PC-3 (cell line): ENCODE measurements at regions of chr15 and their contacts with region 1.

Region 1: GRCh38 chr15:44215594-44215993 is 20.5 kb upstream of the FRMD5 start:
- DNase-seq: peak; percentile 97
- ATAC-seq: peak; percentile 97
- H3K4me3 ChIP-seq: no peak overlapping the region
- H3K27ac ChIP-seq: peak overlapping the region; percentile 67
- H3K4me1 ChIP-seq: peaks cover 20% of the 10 kb centered on the region
- H3K27me3 ChIP-seq: no peaks in the 10 kb centered on the region
- CTCF ChIP-seq: no peak

Region 2: DNA sequence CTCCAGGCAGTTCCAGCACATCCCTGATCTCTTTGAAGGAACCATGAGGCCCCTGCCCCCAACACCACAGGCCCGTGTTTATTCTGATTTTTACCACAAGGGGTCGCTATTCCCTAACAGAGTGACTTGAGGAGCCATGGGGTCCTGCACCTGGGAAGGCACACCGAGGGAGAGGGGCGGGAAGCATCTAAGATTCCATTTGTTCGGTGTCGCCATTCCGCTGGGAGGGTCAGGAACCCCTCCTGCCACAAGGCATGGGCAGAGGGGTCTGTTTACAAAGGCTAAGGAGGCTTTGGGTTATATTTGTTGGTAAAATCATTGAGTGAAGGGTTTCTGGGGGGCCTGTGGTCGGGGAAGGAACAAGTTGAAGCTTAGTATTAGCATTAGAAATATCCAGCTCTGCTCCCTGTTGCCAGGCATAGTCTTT is 311.7 kb before region 1 on chr15:
- CTCF ChIA-PET with region 1: no interaction called
- POLR2A ChIA-PET with region 1: no interaction called
- intact Hi-C with region 1: loop called (anchors 1 kb)
- DNase-seq: peak; percentile 90
- ATAC-seq: peak; percentile 90
- H3K4me3 ChIP-seq: no peak overlapping the region
- H3K27ac ChIP-seq: no peak overlapping the region
- H3K4me1 ChIP-seq: peaks cover 11% of the 10 kb centered on the region
- H3K27me3 ChIP-seq: no peaks in the 10 kb centered on the region
- CTCF ChIP-seq: peak; percentile 96

Region 3: DNA sequence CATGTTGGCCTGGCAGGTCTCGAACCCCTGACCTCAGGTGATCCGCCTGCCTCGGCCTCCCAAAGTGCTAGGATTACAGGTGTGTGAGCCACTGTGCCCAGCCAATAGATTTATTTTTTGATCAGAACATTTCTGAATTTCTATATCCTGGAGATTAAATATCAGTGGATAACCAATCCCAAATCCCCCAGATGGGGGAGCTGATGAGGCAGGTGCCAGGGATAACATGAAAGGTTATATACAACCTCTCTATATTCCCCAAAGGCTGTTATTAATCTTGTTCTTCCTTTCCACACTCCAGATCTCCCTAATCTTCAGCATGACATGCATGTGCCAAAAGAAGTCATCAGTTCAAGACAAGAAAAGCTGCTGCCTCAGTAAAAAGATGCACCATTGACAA is 276.5 kb before region 1 on chr15:
- CTCF ChIA-PET with region 1: no interaction called
- POLR2A ChIA-PET with region 1: no interaction called
- intact Hi-C with region 1: loop called (anchors 1 kb)
- DNase-seq: peak; percentile 75
- ATAC-seq: peak; percentile 86
- H3K4me3 ChIP-seq: no peak overlapping the region
- H3K27ac ChIP-seq: no peak overlapping the region
- H3K4me1 ChIP-seq: no peaks in the 10 kb centered on the region
- H3K27me3 ChIP-seq: no peaks in the 10 kb centered on the region
- CTCF ChIP-seq: peak; percentile 78

Region 4: GRCh38 chr15:44066316-44066740 is 149.3 kb before region 1 on chr15:
- CTCF ChIA-PET with region 1: no interaction called
- POLR2A ChIA-PET with region 1: no interaction called
- intact Hi-C with region 1: loop called (anchors 2 kb)
- DNase-seq: peak; percentile 86
- ATAC-seq: peak; percentile 62
- H3K4me3 ChIP-seq: peak overlapping the region; percentile 7; the same call in 1 of the 2 replicates
- H3K27ac ChIP-seq: no peak overlapping the region
- H3K4me1 ChIP-seq: peaks cover 14% of the 10 kb centered on the region; the same call in 1 of the 2 replicates
- H3K27me3 ChIP-seq: no peaks in the 10 kb centered on the region
- CTCF ChIP-seq: peak; percentile 98

Region 5: DNA sequence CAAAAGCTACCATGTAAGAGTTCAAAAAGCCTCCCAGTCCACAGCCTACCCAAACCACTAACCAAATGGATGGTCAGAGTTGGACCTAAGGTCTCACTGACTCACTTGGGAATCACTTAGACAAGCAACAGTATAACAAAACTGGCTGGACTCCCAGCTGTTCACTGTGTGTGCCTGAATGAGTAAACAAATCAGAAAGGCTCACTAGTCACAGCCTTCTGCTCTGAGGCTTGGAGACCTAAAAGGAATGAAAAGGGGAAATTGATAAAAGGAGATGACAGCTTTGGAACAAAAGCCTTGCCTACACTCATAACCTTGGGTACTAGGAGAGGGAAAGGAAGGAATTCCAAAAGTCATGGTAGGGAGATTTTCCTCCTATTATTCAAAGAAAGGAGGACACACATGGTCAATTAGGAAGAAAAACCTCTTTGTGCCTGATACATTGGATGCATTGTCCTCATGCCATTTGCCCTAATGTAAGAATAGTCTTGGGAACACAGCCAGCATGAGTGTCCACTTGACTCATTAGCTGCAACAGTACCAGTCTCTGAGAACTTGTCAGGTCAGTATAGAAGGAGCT is 112.8 kb before region 1 on chr15:
- CTCF ChIA-PET with region 1: no interaction called
- POLR2A ChIA-PET with region 1: no interaction called
- intact Hi-C with region 1: loop called (anchors 2 kb)
- DNase-seq: peak; percentile 99
- ATAC-seq: peak; percentile 93
- H3K4me3 ChIP-seq: peak overlapping the region; percentile 39; the same call in 1 of the 2 replicates
- H3K27ac ChIP-seq: peak overlapping the region; percentile 96
- H3K4me1 ChIP-seq: peaks cover 35% of the 10 kb centered on the region
- H3K27me3 ChIP-seq: no peaks in the 10 kb centered on the region
- CTCF ChIP-seq: no peak

Region 6: GRCh38 chr15:44157685-44158099 is 57.9 kb before region 1 on chr15:
- CTCF ChIA-PET with region 1: no interaction called
- POLR2A ChIA-PET with region 1: no interaction called
- intact Hi-C with region 1: loop called (anchors 1 kb)
- DNase-seq: peak; percentile 97
- ATAC-seq: peak; percentile 90
- H3K4me3 ChIP-seq: peak overlapping the region; percentile 49; the same call in 1 of the 2 replicates
- H3K27ac ChIP-seq: peak overlapping the region; percentile 93
- H3K4me1 ChIP-seq: peaks cover 39% of the 10 kb centered on the region
- H3K27me3 ChIP-seq: no peaks in the 10 kb centered on the region
- CTCF ChIP-seq: no peak

Region 7: DNA sequence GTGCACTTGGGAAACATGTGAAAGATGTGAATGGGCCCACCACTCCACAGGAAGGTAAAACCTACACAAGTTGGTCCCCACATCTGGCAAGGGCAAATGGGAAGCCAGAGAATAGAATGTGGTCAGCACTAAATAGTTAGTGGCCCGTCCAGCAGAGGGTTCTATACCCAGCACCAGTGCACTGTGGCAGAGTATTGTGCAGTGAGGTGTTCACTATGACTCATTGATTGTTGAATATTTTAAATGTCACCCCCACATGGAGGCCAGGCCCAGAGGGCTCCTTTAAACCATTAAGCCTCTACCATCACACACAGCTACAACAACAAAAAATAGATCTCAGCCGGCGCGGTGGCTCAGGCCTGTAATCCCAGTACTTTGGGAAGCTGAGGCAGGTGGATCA is 32.2 kb before region 1 on chr15:
- CTCF ChIA-PET with region 1: no interaction called
- POLR2A ChIA-PET with region 1: no interaction called
- intact Hi-C with region 1: no loop called
- DNase-seq: peak; percentile 19
- ATAC-seq: peak; percentile 24; the same call in 1 of the 2 replicates
- H3K4me3 ChIP-seq: no peak overlapping the region
- H3K27ac ChIP-seq: no peak overlapping the region
- H3K4me1 ChIP-seq: no peaks in the 10 kb centered on the region; the same call in 1 of the 2 replicates
- H3K27me3 ChIP-seq: no peaks in the 10 kb centered on the region
- CTCF ChIP-seq: no peak

Region 8: GRCh38 chr15:44195151-44195740 is 20.3 kb before region 1 on chr15 and contains the start of gene FRMD5:
- CTCF ChIA-PET with region 1: interaction called, 5 read pairs
- POLR2A ChIA-PET with region 1: no interaction called
- intact Hi-C with region 1: loop called (anchors 1 kb)
- DNase-seq: peak; percentile 98
- ATAC-seq: peak; percentile 84
- H3K4me3 ChIP-seq: peak within 1 kb of the TSS; percentile 81
- H3K27ac ChIP-seq: peak within 1 kb of the TSS; percentile 51
- H3K4me1 ChIP-seq: peaks cover 30% of the 10 kb centered on the region
- H3K27me3 ChIP-seq: no peaks in the 10 kb centered on the region
- CTCF ChIP-seq: peak; percentile 37; the same call in 1 of the 2 replicates
- total RNA-seq, gene FRMD5: 8.7 and 12.2 TPM in 2 replicates